ENCODE measurements at regions of chr13 and their contacts with region 1.

Region 1: DNA sequence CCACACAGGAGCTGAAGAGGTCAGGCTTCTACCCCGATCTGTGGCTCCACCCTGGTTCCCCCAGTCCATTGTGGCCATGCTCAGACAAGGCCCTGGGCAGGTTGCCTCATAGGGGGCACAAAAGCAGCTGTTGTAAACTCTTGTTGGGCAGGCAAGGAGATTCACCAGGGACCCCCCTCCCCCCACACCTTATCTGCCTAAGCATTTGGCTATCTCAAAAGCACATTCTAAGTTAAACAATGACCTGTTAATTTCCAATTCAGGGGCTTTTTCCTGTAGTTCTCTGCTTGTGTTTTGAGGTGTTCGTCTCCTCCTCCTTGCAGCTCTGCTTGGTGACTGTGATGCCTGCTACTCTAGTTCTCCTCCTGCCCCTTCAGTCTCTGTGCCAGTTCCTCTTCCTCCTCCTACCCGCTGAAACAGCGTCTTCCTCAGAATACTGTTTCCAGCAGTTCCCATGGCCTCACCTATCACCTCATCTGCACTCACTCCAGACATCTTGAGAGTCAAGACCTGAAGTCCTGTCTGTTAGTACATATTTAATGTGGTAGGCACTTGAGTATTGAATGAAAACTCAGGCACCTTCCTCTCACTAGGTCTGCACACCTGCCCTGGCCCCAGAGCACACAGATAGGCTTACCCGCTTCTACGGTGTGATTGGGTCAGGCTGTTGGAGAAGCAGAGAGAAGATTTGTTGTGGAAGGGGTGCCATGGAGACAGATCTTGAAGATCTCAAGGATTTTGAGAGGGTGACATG is 31.7 kb downstream of the SPATA13 start:
- DNase-seq: no peak
- ATAC-seq: no peak
- H3K4me3 ChIP-seq: no peak overlapping the region
- H3K4me3 Mint-ChIP-seq: no peak overlapping the region
- H3K27ac ChIP-seq: no peak overlapping the region
- H3K27ac Mint-ChIP-seq: no peak overlapping the region
- H3K4me1 ChIP-seq: peaks cover 0 to 3% of the 10 kb centered on the region in 2 experiments
- H3K4me1 Mint-ChIP-seq: peaks cover 0 to 6% (median under 1%) of the 10 kb centered on the region in 3 donors
- H3K27me3 ChIP-seq: no peaks in the 10 kb centered on the region
- H3K27me3 Mint-ChIP-seq: no peaks in the 10 kb centered on the region

Region 2: DNA sequence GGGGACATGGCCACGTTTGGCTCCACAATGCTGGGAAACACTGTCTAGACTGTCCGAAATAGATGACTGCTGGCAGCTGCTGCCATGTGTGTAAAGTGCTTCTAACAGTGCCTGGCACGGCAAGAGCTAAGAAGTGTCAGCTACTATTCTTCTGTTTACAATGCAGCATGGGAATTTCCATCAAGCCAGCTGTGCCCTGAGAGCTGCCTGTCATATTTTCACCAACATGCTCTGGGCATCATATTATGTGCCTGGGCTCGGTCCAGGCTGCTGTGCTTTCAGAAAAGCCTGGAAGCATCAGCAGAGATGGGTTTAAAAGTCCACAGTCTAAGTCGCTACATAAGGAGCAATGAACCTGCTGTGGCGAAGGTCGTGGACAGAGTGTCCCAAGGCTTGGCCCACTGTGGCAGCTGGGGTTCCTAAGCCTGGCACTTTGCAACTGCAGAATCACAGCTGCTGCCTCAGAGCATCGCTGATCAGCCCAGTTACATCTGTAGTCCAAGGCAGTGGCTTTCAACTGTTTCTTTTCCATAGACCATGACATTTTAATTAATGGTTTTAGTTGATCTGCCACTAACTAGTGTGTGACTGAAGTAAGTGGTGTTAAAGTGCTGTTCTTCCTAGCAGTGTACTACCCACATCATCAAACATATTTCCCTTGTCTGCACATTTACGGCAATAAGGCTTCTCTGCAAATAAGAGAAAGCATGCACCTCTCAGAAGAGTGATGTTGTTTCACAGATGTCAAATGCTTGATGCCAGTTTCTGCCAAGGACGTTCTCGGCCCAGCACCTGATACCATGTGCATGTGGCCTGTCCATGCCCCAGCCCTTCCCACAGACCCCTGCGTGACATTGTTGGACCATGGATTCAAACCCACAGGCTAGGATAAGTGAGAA is 199.2 kb before region 1 on chr13:
- CTCF ChIA-PET with region 1: no interaction called
- POLR2A ChIA-PET with region 1: no interaction called
- DNase-seq: no peak
- ATAC-seq: no peak
- H3K4me3 ChIP-seq: no peak overlapping the region
- H3K4me3 Mint-ChIP-seq: no peak overlapping the region
- H3K27ac ChIP-seq: no peak overlapping the region
- H3K27ac Mint-ChIP-seq: no peak overlapping the region
- H3K4me1 ChIP-seq: no peaks in the 10 kb centered on the region
- H3K4me1 Mint-ChIP-seq: peaks cover 3 to 7% (median 4%) of the 10 kb centered on the region in 3 donors
- H3K27me3 ChIP-seq: peaks cover 0 to 15% of the 10 kb centered on the region in 2 experiments
- H3K27me3 Mint-ChIP-seq: peaks cover 16 to 20% of the 10 kb centered on the region in 2 donors

Region 3: GRCh38 chr13:24036115-24036514 is 156.1 kb before region 1 on chr13:
- CTCF ChIA-PET with region 1: no interaction called
- POLR2A ChIA-PET with region 1: interaction called in 1 of 2 experiments, 10 read pairs
- DNase-seq: no peak
- ATAC-seq: no peak
- H3K4me3 ChIP-seq: no peak overlapping the region
- H3K4me3 Mint-ChIP-seq: no peak overlapping the region
- H3K27ac ChIP-seq: no peak overlapping the region
- H3K27ac Mint-ChIP-seq: no peak overlapping the region
- H3K4me1 ChIP-seq: no peaks in the 10 kb centered on the region
- H3K4me1 Mint-ChIP-seq: peaks cover 0 to 7% (median 5%) of the 10 kb centered on the region in 3 donors
- H3K27me3 ChIP-seq: peaks cover 0 to 8% of the 10 kb centered on the region in 2 experiments
- H3K27me3 Mint-ChIP-seq: peaks cover 5 to 29% of the 10 kb centered on the region in 2 donors

Region 4: DNA sequence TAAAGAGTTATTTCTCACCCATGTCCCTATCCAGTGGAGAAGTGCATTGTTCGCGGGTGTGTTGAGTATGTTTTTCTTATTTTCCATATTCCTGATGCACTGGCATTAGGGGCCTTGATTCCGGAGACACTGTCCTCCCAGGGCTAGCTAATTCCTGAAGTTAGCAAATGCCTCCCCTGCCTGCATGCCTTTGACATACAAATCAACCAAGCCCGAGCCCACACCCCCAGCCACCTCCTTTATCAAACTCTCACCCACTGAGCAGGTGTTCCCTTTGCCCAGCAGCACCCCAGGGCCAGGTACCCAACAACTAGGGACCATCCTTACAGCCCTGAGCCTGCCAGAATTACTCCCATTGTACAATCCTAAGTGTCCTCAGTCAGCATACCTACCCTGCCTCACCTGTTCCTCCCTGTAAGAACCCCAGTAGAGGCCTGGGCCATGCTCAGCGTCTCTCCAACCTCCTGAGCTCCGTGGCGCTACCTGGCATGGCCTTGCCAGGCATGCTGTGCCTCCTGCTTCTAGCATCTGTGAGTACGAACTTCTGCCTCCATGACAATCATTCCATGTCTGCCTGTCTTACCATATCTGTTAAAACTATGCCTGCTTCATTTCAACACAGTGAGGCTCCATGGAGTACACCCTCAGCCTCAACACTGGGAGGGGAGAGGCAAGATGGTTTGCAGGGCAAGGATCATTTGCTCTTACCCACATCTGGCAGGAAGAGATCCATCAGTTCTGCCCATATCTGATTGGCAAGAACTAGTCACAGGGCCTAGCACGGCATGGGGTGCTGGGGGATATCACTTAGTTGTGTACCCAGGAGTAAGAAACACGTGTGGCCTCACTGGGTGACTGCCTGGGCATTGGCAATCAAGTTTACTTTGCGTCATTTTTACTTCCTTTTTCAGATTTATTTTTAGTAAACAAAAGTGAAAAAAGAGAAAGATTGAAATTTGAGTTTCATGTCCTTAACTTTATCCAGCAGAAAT is 1655.7 kb after region 1 on chr13:
- CTCF ChIA-PET with region 1: interaction called in 1 of 2 experiments, 11 read pairs
- POLR2A ChIA-PET with region 1: no interaction called
- DNase-seq: no peak
- ATAC-seq: no peak
- H3K4me3 ChIP-seq: no peak overlapping the region
- H3K4me3 Mint-ChIP-seq: peak overlapping the region in 1 of 3 donors; percentile 62
- H3K27ac ChIP-seq: peak overlapping the region; percentile 62
- H3K27ac Mint-ChIP-seq: peak overlapping the region; percentile 60 to 91
- H3K4me1 ChIP-seq: peaks cover 3 to 28% of the 10 kb centered on the region in 2 experiments
- H3K4me1 Mint-ChIP-seq: peaks cover 34 to 43% (median 42%) of the 10 kb centered on the region in 3 donors
- H3K27me3 ChIP-seq: no peaks in the 10 kb centered on the region
- H3K27me3 Mint-ChIP-seq: no peaks in the 10 kb centered on the region